HepG2 (cell line): ENCODE measurements at regions of chr4 and their contacts with region 1.

Region 1: GRCh38 chr4:114780205-114780604 is 181.6 kb downstream of the UGT8 start:
- DNase-seq: peak; percentile 14
- ATAC-seq: peak; percentile 82
- H3K4me3 ChIP-seq: no peak overlapping the region
- H3K27ac ChIP-seq: no peak overlapping the region
- H3K4me1 ChIP-seq: no peaks in the 10 kb centered on the region
- H3K27me3 ChIP-seq: no peaks in the 10 kb centered on the region; a peak in 1 of 5 replicates
- CTCF ChIP-seq: peak; percentile 49
- EP300 ChIP-seq: no peak
- POLR2A ChIP-seq: no peak
- RAD21 ChIP-seq: no peak

Region 2: GRCh38 chr4:114132830-114133229 is 647.4 kb before region 1 on chr4:
- CTCF ChIA-PET with region 1: no interaction called
- POLR2A ChIA-PET with region 1: no interaction called
- in situ Hi-C with region 1: no loop called
- intact Hi-C with region 1: no loop called
- DNase-seq: no peak
- ATAC-seq: peak; percentile 61; the same call in 2 of the 3 replicates
- H3K4me3 ChIP-seq: no peak overlapping the region
- H3K27ac ChIP-seq: no peak overlapping the region
- H3K4me1 ChIP-seq: no peaks in the 10 kb centered on the region
- H3K27me3 ChIP-seq: no peaks in the 10 kb centered on the region; a peak in 1 of 5 replicates
- CTCF ChIP-seq: no peak
- EP300 ChIP-seq: no peak
- POLR2A ChIP-seq: no peak
- RAD21 ChIP-seq: no peak

Region 3: DNA sequence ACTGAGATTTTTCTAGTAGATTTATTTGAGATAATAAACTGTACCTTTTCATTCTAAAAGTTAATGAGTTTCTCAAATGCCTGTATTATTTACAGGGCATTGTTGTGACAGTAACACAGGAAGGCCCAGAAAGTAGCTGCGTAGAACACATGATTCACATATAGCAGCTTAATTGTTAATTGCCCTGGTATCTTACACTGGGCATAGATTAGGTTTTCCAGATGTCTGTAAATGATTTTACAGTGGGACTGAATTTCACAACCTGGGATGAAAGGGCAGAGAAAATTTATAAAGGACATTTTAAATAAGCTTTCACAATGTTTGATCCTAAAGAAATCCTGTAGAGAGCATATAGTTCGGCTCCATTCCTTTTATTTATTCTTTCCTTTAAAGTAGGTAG is 154.0 kb before region 1 on chr4:
- CTCF ChIA-PET with region 1: no interaction called
- POLR2A ChIA-PET with region 1: no interaction called
- in situ Hi-C with region 1: no loop called
- intact Hi-C with region 1: no loop called
- DNase-seq: no peak
- ATAC-seq: no peak
- H3K4me3 ChIP-seq: no peak overlapping the region
- H3K27ac ChIP-seq: no peak overlapping the region
- H3K4me1 ChIP-seq: no peaks in the 10 kb centered on the region
- H3K27me3 ChIP-seq: no peaks in the 10 kb centered on the region
- CTCF ChIP-seq: no peak
- EP300 ChIP-seq: no peak
- POLR2A ChIP-seq: no peak
- RAD21 ChIP-seq: no peak

Region 4: GRCh38 chr4:114807759-114808404 is 27.7 kb after region 1 on chr4:
- CTCF ChIA-PET with region 1: no interaction called
- POLR2A ChIA-PET with region 1: no interaction called
- in situ Hi-C with region 1: no loop called
- intact Hi-C with region 1: loop called (anchors 2 kb)
- DNase-seq: peak; percentile 42
- ATAC-seq: peak; percentile 99
- H3K4me3 ChIP-seq: no peak overlapping the region
- H3K27ac ChIP-seq: no peak overlapping the region
- H3K4me1 ChIP-seq: no peaks in the 10 kb centered on the region
- H3K27me3 ChIP-seq: no peaks in the 10 kb centered on the region
- CTCF ChIP-seq: peak; percentile 85
- EP300 ChIP-seq: no peak
- POLR2A ChIP-seq: no peak
- RAD21 ChIP-seq: no peak

Region 5: GRCh38 chr4:115054839-115055238 is 274.6 kb after region 1 on chr4:
- CTCF ChIA-PET with region 1: no interaction called
- POLR2A ChIA-PET with region 1: no interaction called
- in situ Hi-C with region 1: loop called (anchors 10 kb)
- intact Hi-C with region 1: loop called (anchors 1 kb)
- DNase-seq: peak; percentile 35
- ATAC-seq: peak; percentile 96
- H3K4me3 ChIP-seq: no peak overlapping the region
- H3K27ac ChIP-seq: no peak overlapping the region
- H3K4me1 ChIP-seq: no peaks in the 10 kb centered on the region
- H3K27me3 ChIP-seq: no peaks in the 10 kb centered on the region
- CTCF ChIP-seq: peak; percentile 47
- EP300 ChIP-seq: no peak
- POLR2A ChIP-seq: no peak
- RAD21 ChIP-seq: no peak

Region 6: GRCh38 chr4:115090483-115091075 is 310.4 kb after region 1 on chr4:
- CTCF ChIA-PET with region 1: no interaction called
- POLR2A ChIA-PET with region 1: no interaction called
- in situ Hi-C with region 1: no loop called
- intact Hi-C with region 1: no loop called
- DNase-seq: peak; percentile 24
- ATAC-seq: 0 out of 3 replicates have a peak, but pooled peaks have one; percentile 51
- H3K4me3 ChIP-seq: no peak overlapping the region
- H3K27ac ChIP-seq: no peak overlapping the region
- H3K4me1 ChIP-seq: no peaks in the 10 kb centered on the region
- H3K27me3 ChIP-seq: no peaks in the 10 kb centered on the region
- CTCF ChIP-seq: peak; percentile 53
- EP300 ChIP-seq: no peak
- POLR2A ChIP-seq: no peak
- RAD21 ChIP-seq: no peak